GM12878 (cell line): ENCODE measurements at regions of chr20 and their contacts with region 1.

Region 1: GRCh38 chr20:50003253-50003656 is 20.5 kb downstream of the SNAI1 start:
- DNase-seq: no peak
- ATAC-seq: no peak
- H3K4me3 ChIP-seq: no peak overlapping the region
- H3K27ac ChIP-seq: no peak overlapping the region
- H3K4me1 ChIP-seq: peaks cover 13% of the 10 kb centered on the region
- H3K27me3 ChIP-seq: no peaks in the 10 kb centered on the region
- CTCF ChIP-seq: no peak
- EP300 ChIP-seq: no peak
- POLR2A ChIP-seq: no peak
- RAD21 ChIP-seq: no peak

Region 2: GRCh38 chr20:50484276-50484976 is 481.2 kb after region 1 on chr20:
- CTCF ChIA-PET with region 1: no interaction called
- POLR2A ChIA-PET with region 1: interaction called, 10 read pairs
- RAD21 ChIA-PET with region 1: no interaction called
- SMC1A ChIA-PET with region 1: no interaction called
- in situ Hi-C with region 1: no loop called
- intact Hi-C with region 1: no loop called
- DNase-seq: no peak
- ATAC-seq: no peak
- H3K4me3 ChIP-seq: no peak overlapping the region
- H3K27ac ChIP-seq: peak overlapping the region; percentile 54
- H3K4me1 ChIP-seq: peaks cover 30% of the 10 kb centered on the region
- H3K27me3 ChIP-seq: no peaks in the 10 kb centered on the region
- CTCF ChIP-seq: no peak
- EP300 ChIP-seq: no peak
- POLR2A ChIP-seq: no peak
- RAD21 ChIP-seq: peak; percentile 36; the same call in 1 of the 2 replicates